Activated naive CD4-positive, alpha-beta T cell treated with anti-CD3 and anti-CD28 coated beads for 36 hours (primary cell): ENCODE measurements at regions of chr15 and their contacts with region 1.

Region 1: GRCh38 chr15:67601073-67601472 is 58.6 kb downstream of the MAP2K5 start:
- DNase-seq: no peak
- H3K4me3 Mint-ChIP-seq: no peak overlapping the region
- H3K27ac Mint-ChIP-seq: no peak overlapping the region
- H3K4me1 Mint-ChIP-seq: no peaks in the 10 kb centered on the region
- H3K27me3 Mint-ChIP-seq: no peaks in the 10 kb centered on the region

Region 2: DNA sequence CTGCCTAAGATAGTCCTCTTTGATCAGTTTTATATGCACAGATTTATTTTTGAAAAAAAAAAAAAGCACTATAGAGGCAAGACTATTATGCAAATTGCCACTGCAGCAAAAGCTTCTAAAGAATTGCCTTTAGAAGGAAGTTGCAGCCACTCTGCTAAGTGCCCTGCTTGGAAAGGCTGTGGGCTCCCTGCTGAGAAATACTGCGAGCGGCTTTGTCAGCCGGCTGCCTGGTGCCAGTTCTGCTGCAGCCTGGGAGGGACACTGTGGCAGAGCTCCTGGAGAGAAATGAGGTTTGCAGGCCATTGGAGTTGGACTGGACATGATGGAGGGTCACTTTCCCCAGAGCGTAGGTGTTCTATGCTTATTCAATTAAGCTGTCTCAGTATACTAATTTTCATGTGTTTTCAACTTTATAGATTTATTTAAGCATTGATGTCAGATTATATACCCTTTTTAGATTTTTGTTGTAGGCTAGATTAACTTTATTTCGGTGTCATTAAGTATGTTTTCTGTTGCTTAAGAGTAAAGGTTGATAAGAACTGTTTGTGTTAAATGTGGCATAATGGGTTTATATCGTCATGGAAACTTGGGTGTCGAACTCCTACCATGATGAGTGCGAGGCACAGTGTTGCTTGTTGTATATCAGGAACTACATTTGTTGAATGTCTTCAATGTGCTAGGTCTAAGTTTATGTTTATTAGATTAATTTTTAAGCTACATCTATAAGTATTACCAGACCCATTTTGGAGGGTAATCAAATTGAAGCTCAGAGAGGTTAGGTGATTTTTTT is 52.0 kb before region 1 on chr15:
- CTCF ChIA-PET with region 1: no interaction called
- intact Hi-C with region 1: loop called (anchors 2 kb)
- DNase-seq: no peak
- H3K4me3 Mint-ChIP-seq: no peak overlapping the region
- H3K27ac Mint-ChIP-seq: no peak overlapping the region
- H3K4me1 Mint-ChIP-seq: peaks cover 22% of the 10 kb centered on the region
- H3K27me3 Mint-ChIP-seq: no peaks in the 10 kb centered on the region

Region 3: DNA sequence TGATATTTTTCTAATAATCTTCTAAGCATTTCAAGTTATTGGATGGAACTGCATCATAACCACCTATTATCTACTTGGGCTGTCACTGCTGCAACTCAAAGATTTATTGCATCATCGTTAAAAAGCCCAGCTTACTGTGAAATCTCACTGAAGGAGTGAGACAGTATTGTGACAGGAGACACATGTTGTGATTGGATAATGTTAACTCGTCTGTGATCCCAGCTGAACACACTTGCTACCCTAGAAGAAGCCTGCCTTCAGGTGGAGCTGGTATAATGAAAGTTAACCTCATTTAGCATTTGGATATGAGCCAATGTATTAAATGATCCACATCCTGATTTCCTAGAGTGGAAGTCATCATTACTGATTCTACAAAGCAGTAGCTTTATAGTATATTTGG is 79.6 kb after region 1 on chr15:
- CTCF ChIA-PET with region 1: no interaction called
- intact Hi-C with region 1: no loop called
- DNase-seq: no peak
- H3K4me3 Mint-ChIP-seq: no peak overlapping the region
- H3K27ac Mint-ChIP-seq: peak overlapping the region; percentile 48
- H3K4me1 Mint-ChIP-seq: peaks cover 3% of the 10 kb centered on the region
- H3K27me3 Mint-ChIP-seq: no peaks in the 10 kb centered on the region